MCF 10A (cell line): ENCODE measurements at regions of chr4 and their contacts with region 1.

Region 1: DNA sequence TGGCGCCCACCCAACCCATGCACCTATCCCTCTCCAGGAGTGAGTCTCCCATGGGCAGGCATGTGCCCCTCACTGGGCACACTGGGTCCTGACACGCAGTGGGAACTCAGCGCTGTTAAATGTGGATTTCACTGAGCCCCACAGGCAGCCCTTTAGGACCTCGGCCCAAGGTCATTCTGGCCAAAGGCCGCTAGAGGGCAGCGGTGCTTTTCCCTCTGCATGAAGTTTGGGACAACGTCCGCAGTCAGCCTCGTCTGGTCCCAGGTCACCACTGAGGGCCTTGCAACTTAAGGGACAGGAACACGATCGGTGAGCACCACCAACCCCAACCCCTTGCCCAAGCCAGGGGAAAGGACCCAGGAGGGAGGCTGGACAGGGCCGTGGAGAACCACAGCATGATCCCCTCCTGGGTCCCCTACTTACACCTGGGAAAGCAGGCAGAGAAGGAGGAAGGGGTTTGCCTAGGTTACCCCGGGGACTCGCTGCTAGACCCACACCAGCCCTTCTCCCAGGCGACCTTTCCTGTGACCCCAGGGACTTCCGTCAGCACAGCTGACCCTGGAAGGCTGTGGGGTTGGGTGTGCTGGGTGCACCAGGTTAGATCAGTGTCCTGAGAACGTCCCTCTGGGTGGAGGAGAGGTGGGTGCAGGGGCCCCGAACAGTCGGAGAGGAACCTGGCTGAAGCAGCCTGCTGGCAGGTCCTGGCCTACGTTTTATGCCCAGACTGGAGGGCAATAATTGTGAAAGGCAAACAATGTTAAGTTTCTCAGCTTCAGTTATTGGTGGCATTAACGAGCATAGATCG is 24.0 kb downstream of the CYTL1 start:
- DNase-seq: peak; percentile 79
- H3K4me3 Mint-ChIP-seq: no peak overlapping the region
- H3K27ac Mint-ChIP-seq: no peak overlapping the region
- H3K4me1 Mint-ChIP-seq: peaks cover 28% of the 10 kb centered on the region
- H3K27me3 Mint-ChIP-seq: peaks cover 40% of the 10 kb centered on the region
- CTCF ChIP-seq: peak; percentile 93

Region 2: GRCh38 chr4:4614925-4615678 is 380.2 kb before region 1 on chr4:
- CTCF ChIA-PET with region 1: no interaction called
- POLR2A ChIA-PET with region 1: no interaction called
- intact Hi-C with region 1: no loop called
- DNase-seq: no peak
- H3K4me3 Mint-ChIP-seq: no peak overlapping the region
- H3K27ac Mint-ChIP-seq: no peak overlapping the region
- H3K4me1 Mint-ChIP-seq: no peaks in the 10 kb centered on the region
- H3K27me3 Mint-ChIP-seq: no peaks in the 10 kb centered on the region
- CTCF ChIP-seq: no peak

Region 3: DNA sequence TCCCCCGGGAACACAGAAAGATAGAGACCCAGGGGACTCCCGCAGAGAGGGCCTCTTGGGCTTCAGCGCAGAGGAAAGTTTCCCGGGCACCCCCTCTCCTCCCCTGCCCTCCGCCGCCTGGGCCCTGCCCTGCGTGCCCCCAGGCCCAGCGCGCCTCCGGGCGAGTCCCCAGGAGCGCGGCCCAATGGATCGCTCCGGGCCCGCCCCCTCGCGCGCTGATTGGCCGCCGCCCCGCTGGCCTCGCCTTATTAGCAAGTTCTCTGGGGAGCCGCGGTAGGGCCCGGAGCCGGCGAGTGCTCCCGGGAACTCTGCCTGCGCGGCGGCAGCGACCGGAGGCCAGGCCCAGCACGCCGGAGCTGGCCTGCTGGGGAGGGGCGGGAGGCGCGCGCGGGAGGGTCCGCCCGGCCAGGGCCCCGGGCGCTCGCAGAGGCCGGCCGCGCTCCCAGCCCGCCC is 135.9 kb before region 1 on chr4 and contains the start of gene MSX1:
- CTCF ChIA-PET with region 1: no interaction called
- POLR2A ChIA-PET with region 1: no interaction called
- intact Hi-C with region 1: no loop called
- DNase-seq: peak; percentile 86
- H3K4me3 Mint-ChIP-seq: peak within 1 kb of the TSS; percentile 79
- H3K27ac Mint-ChIP-seq: peak within 1 kb of the TSS; percentile 94
- H3K4me1 Mint-ChIP-seq: no peaks in the 10 kb centered on the region
- H3K27me3 Mint-ChIP-seq: peaks cover 15% of the 10 kb centered on the region
- CTCF ChIP-seq: no peak
- total RNA-seq, gene MSX1: 3.6 and 3.9 TPM in 2 replicates

Region 4: GRCh38 chr4:5037553-5038551 is 42.5 kb after region 1 on chr4:
- CTCF ChIA-PET with region 1: interaction called, 7 read pairs
- POLR2A ChIA-PET with region 1: interaction called, 3 read pairs
- intact Hi-C with region 1: loop called (anchors 1 kb)
- DNase-seq: peak; percentile 93
- H3K4me3 Mint-ChIP-seq: peak overlapping the region; percentile 50
- H3K27ac Mint-ChIP-seq: peak overlapping the region; percentile 35
- H3K4me1 Mint-ChIP-seq: peaks cover 16% of the 10 kb centered on the region
- H3K27me3 Mint-ChIP-seq: no peaks in the 10 kb centered on the region
- CTCF ChIP-seq: no peak

Region 5: DNA sequence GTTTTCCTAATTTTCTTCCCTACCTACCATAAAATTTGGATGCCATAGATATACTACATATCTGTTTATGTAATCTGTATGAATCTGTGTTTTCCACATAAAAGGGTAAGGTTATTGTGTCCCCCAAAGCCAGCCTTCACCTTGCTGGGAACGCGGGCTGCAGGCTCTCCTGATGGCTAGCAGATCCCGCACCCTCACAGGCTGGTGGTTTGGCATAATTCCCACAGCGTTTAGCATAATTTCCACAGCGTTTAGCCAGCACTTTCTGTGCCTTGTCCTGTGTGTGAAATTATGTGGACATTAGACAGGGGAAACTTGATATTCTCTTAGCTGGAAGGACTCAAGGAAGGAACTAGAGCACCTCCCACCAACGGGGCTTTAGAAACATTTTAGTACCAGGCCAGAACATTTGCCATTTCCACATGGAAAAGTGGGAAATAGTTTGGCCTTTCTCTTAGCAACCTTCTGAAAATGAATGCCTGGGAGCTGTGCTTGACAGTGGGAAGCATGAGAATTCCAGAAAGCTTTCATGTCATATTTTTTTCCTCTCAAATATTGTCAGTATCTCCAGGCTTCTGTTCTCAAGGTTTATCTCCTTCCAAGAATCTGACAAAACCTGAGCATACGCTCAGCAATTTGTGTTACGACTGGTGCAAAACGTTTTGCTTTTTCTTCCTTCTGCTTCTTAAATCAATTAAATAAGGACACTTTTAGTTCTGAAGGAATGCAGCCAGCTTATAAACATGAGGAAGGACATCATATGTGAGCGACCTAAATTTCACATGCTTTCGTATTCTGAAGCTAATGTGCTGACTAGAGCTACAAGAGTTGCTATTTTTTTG is 123.9 kb after region 1 on chr4:
- CTCF ChIA-PET with region 1: no interaction called
- POLR2A ChIA-PET with region 1: no interaction called
- intact Hi-C with region 1: no loop called
- DNase-seq: no peak
- H3K4me3 Mint-ChIP-seq: no peak overlapping the region
- H3K27ac Mint-ChIP-seq: no peak overlapping the region
- H3K4me1 Mint-ChIP-seq: no peaks in the 10 kb centered on the region
- H3K27me3 Mint-ChIP-seq: peaks cover 11% of the 10 kb centered on the region
- CTCF ChIP-seq: no peak

Region 6: GRCh38 chr4:5142726-5143125 is 147.4 kb after region 1 on chr4:
- CTCF ChIA-PET with region 1: no interaction called
- POLR2A ChIA-PET with region 1: no interaction called
- intact Hi-C with region 1: loop called (anchors 1 kb)
- DNase-seq: peak; percentile 54
- H3K4me3 Mint-ChIP-seq: no peak overlapping the region
- H3K27ac Mint-ChIP-seq: no peak overlapping the region
- H3K4me1 Mint-ChIP-seq: no peaks in the 10 kb centered on the region
- H3K27me3 Mint-ChIP-seq: peaks cover 61% of the 10 kb centered on the region
- CTCF ChIP-seq: peak; percentile 34

Region 7: GRCh38 chr4:5378002-5378401 is 382.7 kb after region 1 on chr4:
- CTCF ChIA-PET with region 1: interaction called, 3 read pairs
- POLR2A ChIA-PET with region 1: no interaction called
- intact Hi-C with region 1: loop called (anchors 2 kb)
- DNase-seq: peak; percentile 55
- H3K4me3 Mint-ChIP-seq: no peak overlapping the region
- H3K27ac Mint-ChIP-seq: no peak overlapping the region
- H3K4me1 Mint-ChIP-seq: no peaks in the 10 kb centered on the region
- H3K27me3 Mint-ChIP-seq: peaks cover 20% of the 10 kb centered on the region
- CTCF ChIP-seq: no peak

Region 8: GRCh38 chr4:5710961-5711478 is 715.7 kb after region 1 on chr4 and contains the start of gene EVC:
- CTCF ChIA-PET with region 1: interaction called, 6 read pairs
- POLR2A ChIA-PET with region 1: no interaction called
- intact Hi-C with region 1: loop called (anchors 5 kb)
- DNase-seq: peak; percentile 78
- H3K4me3 Mint-ChIP-seq: peak within 1 kb of the TSS; percentile 74
- H3K27ac Mint-ChIP-seq: peak within 1 kb of the TSS; percentile 79
- H3K4me1 Mint-ChIP-seq: peaks cover 36% of the 10 kb centered on the region
- H3K27me3 Mint-ChIP-seq: no peaks in the 10 kb centered on the region
- CTCF ChIP-seq: no peak
- total RNA-seq, gene EVC: 29.0 and 29.3 TPM in 2 replicates

Region 9: GRCh38 chr4:5785806-5786680 is 790.7 kb after region 1 on chr4:
- CTCF ChIA-PET with region 1: interaction called, 5 read pairs
- POLR2A ChIA-PET with region 1: no interaction called
- intact Hi-C with region 1: loop called (anchors 1 kb)
- DNase-seq: peak; percentile 69
- H3K4me3 Mint-ChIP-seq: no peak overlapping the region
- H3K27ac Mint-ChIP-seq: peak overlapping the region; percentile 58
- H3K4me1 Mint-ChIP-seq: peaks cover 9% of the 10 kb centered on the region
- H3K27me3 Mint-ChIP-seq: no peaks in the 10 kb centered on the region
- CTCF ChIP-seq: no peak